AG04450 (cell line): ENCODE measurements at regions of chr15 and their contacts with region 1.

Region 1: DNA sequence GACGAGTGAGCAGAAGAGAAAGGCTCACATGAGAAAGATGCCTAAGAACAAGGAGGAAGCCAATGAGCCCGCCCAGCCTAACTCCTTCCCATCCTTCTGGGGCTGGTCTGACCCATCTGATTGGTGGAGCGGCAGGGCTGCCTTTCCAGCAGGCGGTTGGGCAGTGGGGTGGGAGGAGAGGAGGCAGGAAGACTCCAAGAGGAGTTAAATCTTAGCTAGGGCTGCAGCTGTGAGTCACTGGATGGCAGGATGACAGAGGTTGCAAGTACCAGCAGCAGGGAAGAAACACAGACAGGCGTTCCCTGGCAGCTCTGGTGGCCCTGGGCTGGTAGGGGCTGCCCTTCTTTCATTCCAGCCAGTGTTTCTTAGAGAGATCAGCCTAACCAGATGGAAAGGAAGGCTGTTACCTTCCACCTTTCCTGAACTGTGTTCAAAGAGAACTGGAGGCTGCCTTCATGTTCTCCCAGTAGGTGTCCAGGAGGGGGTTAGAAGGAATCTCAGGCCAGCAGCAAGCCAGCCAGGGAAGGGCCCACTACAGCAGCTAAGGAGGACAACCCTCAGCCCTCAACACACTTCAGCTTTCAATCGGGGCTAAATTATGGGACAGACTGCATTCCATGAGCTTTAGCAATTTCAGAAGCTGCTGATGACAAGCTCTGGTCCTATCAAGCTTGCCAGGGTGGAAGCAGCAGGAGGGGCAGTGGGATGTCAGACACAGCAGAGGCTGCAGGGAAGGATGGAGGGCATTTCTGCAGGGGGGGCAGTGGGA is 50.3 kb downstream of the CHSY1 start:
- DNase-seq: peak; percentile 93
- H3K4me3 ChIP-seq: peak overlapping the region; percentile 31; the same call in 1 of the 2 replicates
- H3K27ac ChIP-seq: peak overlapping the region; percentile 91
- H3K27me3 ChIP-seq: no peaks in the 10 kb centered on the region
- CTCF ChIP-seq: no peak

Region 2: DNA sequence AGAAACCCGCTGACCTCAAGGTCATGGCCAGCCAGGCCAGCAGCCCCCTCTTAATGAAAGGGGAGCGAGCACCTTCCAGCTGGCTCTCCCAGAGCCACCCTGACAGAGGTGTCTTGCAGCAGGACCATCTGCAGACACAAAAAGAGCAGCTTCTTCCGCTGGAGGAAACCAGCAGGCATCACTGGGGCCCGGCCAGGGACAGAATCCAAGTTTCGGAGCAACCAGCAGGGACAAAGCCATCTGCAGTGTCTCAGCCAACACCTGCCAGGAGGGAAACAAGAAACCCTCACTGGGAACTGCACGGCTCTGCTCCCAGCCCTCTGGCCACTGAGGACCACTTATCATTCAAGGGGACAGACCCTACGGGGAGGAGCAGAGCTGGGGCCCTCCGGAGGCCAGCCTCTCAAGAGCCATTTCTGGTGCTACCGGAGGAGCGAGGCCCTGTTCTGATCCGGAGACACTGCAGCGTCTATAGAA is 38.9 kb before region 1 on chr15:
- CTCF ChIA-PET with region 1: no interaction called
- POLR2A ChIA-PET with region 1: no interaction called
- DNase-seq: no peak
- H3K4me3 ChIP-seq: no peak overlapping the region
- H3K27ac ChIP-seq: no peak overlapping the region
- H3K27me3 ChIP-seq: no peaks in the 10 kb centered on the region
- CTCF ChIP-seq: no peak

Region 3: DNA sequence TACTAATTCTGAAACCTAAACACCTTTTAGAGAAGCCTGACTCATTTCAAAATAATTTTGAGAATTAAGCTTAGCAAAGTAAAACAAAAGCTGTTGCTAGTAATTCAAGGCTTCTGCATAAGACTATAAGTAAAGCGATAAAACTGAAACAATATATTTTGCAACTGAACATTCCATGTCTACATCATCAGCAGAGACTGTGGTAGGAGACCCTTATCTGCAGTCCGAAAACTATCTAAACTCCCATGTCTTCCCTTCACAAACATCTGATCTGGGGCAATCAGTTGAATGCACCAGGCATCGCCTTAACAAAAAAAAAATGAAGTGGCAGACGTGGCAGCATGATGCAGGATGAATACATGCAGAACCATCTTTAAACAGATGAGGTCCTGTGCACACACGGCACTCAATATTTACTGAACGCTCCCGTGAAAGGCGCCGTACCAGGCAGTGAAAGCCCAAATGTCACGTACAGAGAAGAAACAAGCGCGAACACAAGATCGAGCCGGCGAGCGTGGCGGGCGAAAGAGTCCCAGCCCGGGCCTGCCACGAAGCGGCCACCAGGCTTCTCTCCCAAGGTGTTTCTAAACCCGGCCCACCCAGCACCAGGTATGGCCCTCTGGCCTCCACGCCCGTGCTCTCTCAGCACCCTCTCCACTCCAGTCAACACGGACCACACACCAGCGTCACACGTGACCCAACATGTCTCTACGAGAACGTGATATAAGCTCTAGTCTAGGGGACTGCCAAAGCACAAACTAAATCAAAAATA is 12.8 kb before region 1 on chr15:
- CTCF ChIA-PET with region 1: no interaction called
- POLR2A ChIA-PET with region 1: interaction called, 10 read pairs
- DNase-seq: no peak
- H3K4me3 ChIP-seq: peak overlapping the region; percentile 60
- H3K27ac ChIP-seq: peak overlapping the region; percentile 100
- H3K27me3 ChIP-seq: no peaks in the 10 kb centered on the region
- CTCF ChIP-seq: no peak

Region 4: GRCh38 chr15:101578437-101578894 is 376.9 kb after region 1 on chr15:
- CTCF ChIA-PET with region 1: no interaction called
- POLR2A ChIA-PET with region 1: no interaction called
- DNase-seq: no peak
- H3K4me3 ChIP-seq: no peak overlapping the region
- H3K27ac ChIP-seq: no peak overlapping the region
- H3K27me3 ChIP-seq: no peaks in the 10 kb centered on the region
- CTCF ChIP-seq: 0 out of 2 replicates have a peak, but pooled peaks have one; percentile 3